Naive thymus-derived CD4-positive, alpha-beta T cell (primary cell): ENCODE measurements at regions of chr13 and their contacts with region 1.

Region 1: DNA sequence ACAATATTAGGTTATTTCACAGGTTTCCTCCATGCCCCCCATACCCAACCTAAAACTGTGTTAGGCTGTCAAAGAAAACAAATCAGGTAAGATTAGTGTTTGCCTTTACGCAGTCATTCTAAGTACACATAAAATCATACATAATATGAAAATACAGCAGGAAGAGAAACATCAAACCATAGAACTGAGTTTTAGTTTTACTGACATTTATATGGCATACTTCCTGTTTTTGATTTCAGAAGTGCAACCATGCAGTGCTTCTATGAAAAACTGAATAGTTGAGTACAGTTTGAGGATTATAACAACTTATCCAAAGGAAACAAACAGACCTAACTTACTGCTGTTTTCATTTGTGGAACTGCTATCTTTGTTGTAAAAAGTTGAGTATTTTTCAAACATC is 91.3 kb downstream of the KCNRG start:
- DNase-seq: peak in 3 of 9 donors; percentile 14 to 37 (median 29)
- ATAC-seq: peak; percentile 64
- H3K4me3 ChIP-seq: no peak overlapping the region
- H3K4me3 Mint-ChIP-seq: peak overlapping the region in 9 of 10 donors; percentile 30 to 81 (median 61)
- H3K27ac ChIP-seq: peak overlapping the region; percentile 38
- H3K27ac Mint-ChIP-seq: peak overlapping the region; percentile 74 to 94 (median 93)
- H3K4me1 ChIP-seq: peaks cover 16 to 21% of the 10 kb centered on the region in 2 donors
- H3K4me1 Mint-ChIP-seq: peaks cover 22 to 75% (median 56%) of the 10 kb centered on the region in 7 donors
- H3K27me3 ChIP-seq: no peaks in the 10 kb centered on the region
- H3K27me3 Mint-ChIP-seq: no peaks in the 10 kb centered on the region

Region 2: DNA sequence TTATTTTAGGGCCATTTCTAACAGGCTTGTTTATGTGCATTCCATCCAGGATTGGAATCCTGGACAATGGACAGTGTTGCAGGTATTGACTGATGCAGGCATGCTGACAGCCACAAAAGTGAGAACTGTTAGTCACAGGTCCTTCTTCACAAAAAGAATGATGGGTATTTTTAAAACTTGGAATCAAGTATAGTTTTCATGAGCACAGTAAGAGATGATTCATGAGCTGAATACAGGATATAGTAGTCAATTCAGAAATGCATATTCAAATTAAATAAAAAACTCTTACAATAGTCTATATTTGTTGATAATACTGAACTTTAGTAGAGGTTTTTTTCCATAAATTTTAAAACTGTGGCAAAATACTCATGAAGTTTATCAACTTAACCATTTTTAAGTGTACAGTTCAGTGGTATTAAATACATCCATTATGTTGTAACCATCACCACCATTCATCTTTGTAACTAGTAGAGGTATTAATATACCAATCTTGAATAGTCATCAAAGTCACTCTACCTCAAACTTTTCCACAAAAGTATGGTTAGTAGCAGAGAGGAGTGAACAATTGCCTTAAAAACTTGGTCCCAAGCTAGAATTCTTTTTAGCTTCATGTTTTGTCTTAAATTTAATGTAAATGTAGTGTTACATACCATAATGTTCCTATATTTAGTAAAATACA is 11.8 kb before region 1 on chr13:
- CTCF ChIA-PET with region 1: interaction called, 5 read pairs
- POLR2A ChIA-PET with region 1: no interaction called
- intact Hi-C with region 1: loop called in 1 of 2 experiments (anchors 2 kb)
- DNase-seq: no peak
- ATAC-seq: no peak
- H3K4me3 ChIP-seq: no peak overlapping the region
- H3K4me3 Mint-ChIP-seq: no peak overlapping the region
- H3K27ac ChIP-seq: no peak overlapping the region
- H3K27ac Mint-ChIP-seq: no peak overlapping the region
- H3K4me1 ChIP-seq: no peaks in the 10 kb centered on the region
- H3K4me1 Mint-ChIP-seq: peaks cover 4 to 21% (median 12%) of the 10 kb centered on the region in 7 donors
- H3K27me3 ChIP-seq: no peaks in the 10 kb centered on the region
- H3K27me3 Mint-ChIP-seq: no peaks in the 10 kb centered on the region